ENCODE measurements at regions of chr17 and their contacts with region 1.

Region 1: DNA sequence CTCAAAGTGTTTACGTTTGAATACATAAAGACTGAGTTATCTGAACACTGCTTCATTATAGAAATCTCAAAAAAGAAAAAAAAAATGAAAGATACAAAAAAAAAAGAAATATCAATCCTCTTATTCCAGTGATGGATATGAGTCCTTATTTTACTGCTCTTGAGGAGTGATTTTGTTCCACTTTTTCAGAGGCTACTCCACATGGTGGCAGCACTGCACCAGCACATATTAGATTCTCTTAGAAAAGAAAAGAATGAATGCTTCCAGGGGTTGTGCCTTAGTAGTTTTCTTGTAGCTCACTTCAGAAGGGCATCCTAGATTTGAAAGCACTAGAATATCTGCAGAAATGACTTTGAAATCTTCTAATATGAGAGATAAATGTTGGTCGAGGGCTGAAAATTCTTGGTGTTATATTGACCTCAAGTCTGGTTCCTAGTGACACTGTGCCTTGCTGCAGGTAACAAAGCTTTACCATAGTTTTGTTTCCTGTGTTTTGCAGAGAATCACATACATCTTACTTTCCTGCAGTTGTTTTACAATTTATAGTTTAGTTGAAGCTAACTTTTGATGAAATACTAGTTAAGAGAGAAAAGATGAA is 25.9 kb downstream of the AP2B1 start:
- DNase-seq: peak in 1 of 2 experiments; percentile 68
- ATAC-seq: peak; percentile 84 to 92; a peak in 5 of 6 replicates
- H3K4me3 ChIP-seq: no peak overlapping the region
- H3K27ac ChIP-seq: no peak overlapping the region
- H3K4me1 ChIP-seq: peaks cover 6% of the 10 kb centered on the region; the same call in 2 of the 3 replicates
- CTCF ChIP-seq: peak; percentile 91
- EP300 ChIP-seq: no peak
- POLR2A ChIP-seq: no peak
- RAD21 ChIP-seq: peak; percentile 72 to 76

Region 2: DNA sequence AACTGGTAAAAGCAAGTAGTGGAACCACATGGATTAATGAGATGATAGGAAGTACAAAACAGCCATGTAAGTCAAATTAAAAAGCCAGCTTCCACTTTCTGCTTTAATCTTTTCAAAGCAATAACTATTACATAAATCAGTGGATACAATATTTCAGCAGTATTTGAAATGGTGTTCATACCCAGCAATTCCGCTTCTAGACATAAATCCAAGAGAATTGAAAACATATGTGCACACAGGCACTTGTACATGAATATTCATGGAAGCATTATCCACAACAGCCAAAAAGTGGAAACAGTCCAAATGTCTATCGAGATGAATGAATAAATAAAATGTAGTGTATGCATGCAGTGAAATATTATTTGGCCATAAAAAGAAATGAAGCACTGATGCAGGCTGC is 103.0 kb before region 1 on chr17:
- CTCF ChIA-PET with region 1: no interaction called
- POLR2A ChIA-PET with region 1: no interaction called
- DNase-seq: no peak
- ATAC-seq: no peak
- H3K4me3 ChIP-seq: no peak overlapping the region
- H3K27ac ChIP-seq: no peak overlapping the region
- H3K4me1 ChIP-seq: 0 out of 3 replicates have a peak, but pooled peaks cover 4% of the 10 kb centered on the region
- CTCF ChIP-seq: no peak
- EP300 ChIP-seq: no peak
- POLR2A ChIP-seq: no peak
- RAD21 ChIP-seq: no peak

Region 3: DNA sequence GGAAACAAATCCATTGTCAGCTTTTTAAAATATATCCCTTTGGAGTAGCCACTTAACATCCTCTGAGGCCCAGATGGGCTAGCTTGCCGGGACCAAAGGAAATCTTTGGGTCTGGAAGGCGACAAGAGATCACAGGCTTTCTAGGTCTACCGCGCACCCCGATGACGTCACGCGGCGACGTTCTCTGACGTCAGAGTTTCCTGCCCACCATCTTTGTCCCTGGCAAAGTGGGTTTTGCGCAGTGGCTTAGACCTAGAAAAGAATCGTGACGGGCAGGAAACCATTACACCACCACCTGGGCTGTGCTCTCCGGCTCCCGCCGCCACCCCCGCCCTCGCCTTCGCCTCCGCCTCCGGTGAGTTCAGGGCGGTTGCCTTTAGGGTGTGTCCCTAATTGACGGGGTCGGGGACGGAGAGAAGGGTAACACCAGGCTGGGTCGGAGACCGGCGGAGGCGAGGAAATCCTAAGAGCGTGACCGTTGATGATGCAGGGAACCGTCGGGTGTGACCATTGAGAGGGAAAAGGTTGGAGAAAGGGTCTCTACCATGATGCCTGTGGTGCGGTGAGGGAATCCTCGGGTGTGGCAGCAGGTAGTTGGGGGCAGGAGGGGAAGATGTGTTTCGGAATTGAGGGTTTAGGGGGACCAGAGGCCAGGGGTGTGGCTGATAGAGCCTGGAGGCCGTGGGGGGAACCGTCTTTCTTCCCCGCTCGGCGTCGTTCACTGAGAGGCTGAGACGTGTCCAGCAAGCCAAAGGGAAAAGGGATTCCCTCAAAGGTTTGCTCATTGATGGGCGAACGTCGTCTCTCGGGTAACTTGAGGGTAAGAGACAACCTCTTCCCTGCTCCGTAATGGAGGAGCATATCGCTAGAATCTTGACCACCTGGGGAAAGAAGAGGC is 25.7 kb before region 1 on chr17 and contains the start of gene AP2B1:
- CTCF ChIA-PET with region 1: interaction called, 30 read pairs
- POLR2A ChIA-PET with region 1: interaction called, 3 read pairs
- DNase-seq: peak; percentile 95 to 99
- ATAC-seq: peak; percentile 88 to 91
- H3K4me3 ChIP-seq: peak within 1 kb of the TSS; percentile 73
- H3K27ac ChIP-seq: peak within 1 kb of the TSS; percentile 91 to 94
- H3K4me1 ChIP-seq: peaks cover 39% of the 10 kb centered on the region
- CTCF ChIP-seq: no peak
- EP300 ChIP-seq: no peak
- POLR2A ChIP-seq: peak; percentile 76
- RAD21 ChIP-seq: no peak
- polyA plus RNA-seq, gene AP2B1: 278 and 309 TPM in 2 replicates

Region 4: DNA sequence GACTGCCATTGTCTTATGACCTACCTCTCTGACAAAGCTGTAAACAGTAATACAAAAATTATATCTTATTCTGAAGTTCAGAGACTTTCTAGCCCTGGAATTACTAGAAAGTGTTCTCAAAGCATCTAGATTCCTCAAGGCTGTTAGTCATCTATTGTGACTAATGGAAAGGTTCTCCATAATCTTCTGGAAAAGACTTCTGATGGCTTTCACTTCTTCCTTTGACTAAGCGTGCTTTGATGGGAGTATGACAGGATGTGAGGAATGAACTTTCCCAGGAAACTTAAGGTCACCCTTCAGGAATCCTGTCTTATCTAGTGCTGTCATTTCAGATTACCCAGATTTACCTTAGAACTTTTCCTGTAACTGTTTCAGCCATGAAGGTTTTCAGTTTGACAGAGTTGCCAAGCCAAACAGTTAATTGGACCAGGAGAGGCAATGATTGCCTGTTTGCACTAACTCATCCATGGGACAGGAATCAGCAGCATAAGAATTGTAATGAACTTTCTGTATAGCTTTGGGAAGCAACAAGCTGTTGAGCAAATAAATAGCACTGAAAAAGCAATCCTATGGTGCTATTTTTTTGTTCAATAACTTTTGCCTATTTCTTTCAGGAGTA is 17.6 kb after region 1 on chr17:
- CTCF ChIA-PET with region 1: interaction called, 66 read pairs
- POLR2A ChIA-PET with region 1: interaction called, 4 read pairs
- DNase-seq: peak in 1 of 2 experiments; percentile 9
- ATAC-seq: peak; percentile 24 to 51; a peak in 4 of 6 replicates
- H3K4me3 ChIP-seq: no peak overlapping the region
- H3K27ac ChIP-seq: no peak overlapping the region
- H3K4me1 ChIP-seq: peaks cover 16% of the 10 kb centered on the region; the same call in 2 of the 3 replicates
- CTCF ChIP-seq: no peak
- EP300 ChIP-seq: no peak
- POLR2A ChIP-seq: no peak
- RAD21 ChIP-seq: no peak

Region 5: DNA sequence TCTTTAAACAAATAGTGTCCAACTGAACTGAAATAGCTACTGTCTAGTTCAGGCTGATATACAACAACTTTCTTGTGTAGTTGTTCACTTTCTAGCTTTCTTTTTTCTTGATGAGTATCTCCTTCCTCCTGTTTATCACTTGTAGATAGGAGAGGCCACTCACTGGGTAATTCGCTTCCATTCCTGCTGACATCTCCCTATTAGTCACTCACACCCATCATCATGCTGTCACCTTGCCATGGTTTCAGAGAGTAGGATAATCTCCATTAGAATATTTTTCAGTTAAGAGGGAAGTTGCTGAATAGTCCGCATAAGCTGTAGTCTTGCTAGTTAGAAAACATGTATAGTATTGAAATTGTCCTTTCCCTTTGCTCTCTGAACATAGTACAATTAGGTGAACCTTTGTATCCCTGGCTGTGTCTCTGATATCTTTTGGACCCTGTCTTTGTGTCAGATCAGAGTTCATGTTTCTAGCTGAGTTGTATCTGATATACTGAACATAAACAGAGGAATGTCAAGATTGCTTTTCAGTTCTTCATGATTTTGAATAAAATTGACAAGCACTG is 54.0 kb after region 1 on chr17:
- CTCF ChIA-PET with region 1: interaction called, 11 read pairs
- POLR2A ChIA-PET with region 1: no interaction called
- DNase-seq: no peak
- ATAC-seq: no peak
- H3K4me3 ChIP-seq: no peak overlapping the region
- H3K27ac ChIP-seq: no peak overlapping the region
- H3K4me1 ChIP-seq: no peaks in the 10 kb centered on the region
- CTCF ChIP-seq: no peak
- EP300 ChIP-seq: no peak
- POLR2A ChIP-seq: no peak
- RAD21 ChIP-seq: no peak

Region 6: GRCh38 chr17:35713069-35713728 is 100.2 kb after region 1 on chr17:
- CTCF ChIA-PET with region 1: interaction called, 10 read pairs
- POLR2A ChIA-PET with region 1: no interaction called
- DNase-seq: no peak
- ATAC-seq: no peak
- H3K4me3 ChIP-seq: no peak overlapping the region
- H3K27ac ChIP-seq: no peak overlapping the region
- H3K4me1 ChIP-seq: peaks cover 14% of the 10 kb centered on the region; the same call in 1 of the 3 replicates
- CTCF ChIP-seq: no peak
- EP300 ChIP-seq: no peak
- POLR2A ChIP-seq: no peak
- RAD21 ChIP-seq: no peak

Region 7: GRCh38 chr17:35740997-35741931 is 128.2 kb after region 1 on chr17:
- CTCF ChIA-PET with region 1: interaction called, 324 read pairs
- POLR2A ChIA-PET with region 1: no interaction called
- DNase-seq: no peak
- ATAC-seq: peak; percentile 54 to 67
- H3K4me3 ChIP-seq: peak overlapping the region; percentile 39
- H3K27ac ChIP-seq: no peak overlapping the region
- H3K4me1 ChIP-seq: peaks cover 6% of the 10 kb centered on the region; the same call in 1 of the 3 replicates
- CTCF ChIP-seq: no peak
- EP300 ChIP-seq: no peak
- POLR2A ChIP-seq: no peak
- RAD21 ChIP-seq: no peak

Measured in A549 (cell line).